ENCODE measurements at regions of chr4 and their contacts with region 1.

Region 1: GRCh38 chr4:95107635-95108034 is 349.9 kb downstream of the BMPR1B start:
- DNase-seq: no peak
- ATAC-seq: no peak

Region 2: GRCh38 chr4:94649381-94650133 is 458.1 kb before region 1 on chr4:
- intact Hi-C with region 1: loop called (anchors 10 kb)
- DNase-seq: no peak
- ATAC-seq: no peak

Region 3: GRCh38 chr4:94714365-94715160 is 393.1 kb before region 1 on chr4:
- intact Hi-C with region 1: no loop called
- DNase-seq: no peak
- ATAC-seq: no peak

Region 4: GRCh38 chr4:94995684-94996394 is 111.8 kb before region 1 on chr4:
- intact Hi-C with region 1: loop called (anchors 10 kb)
- DNase-seq: no peak
- ATAC-seq: peak; percentile 95

Measured in Right ventricle myocardium inferior (tissue), 1 donor.